Activated CD4-positive, alpha-beta memory T cell treated with anti-CD3 and anti-CD28 coated beads, Interleukin-2, amount 10 ng/mL, durations not matched to agents 7 days and 5 days (primary cell): ENCODE measurements at regions of chr13 and their contacts with region 1.

Region 1: GRCh38 chr13:110220471-110220870 is 86.5 kb downstream of the COL4A1 start:
- DNase-seq: no peak
- H3K4me3 Mint-ChIP-seq: no peak overlapping the region
- H3K27ac Mint-ChIP-seq: no peak overlapping the region
- H3K4me1 Mint-ChIP-seq: no peaks in the 10 kb centered on the region
- H3K27me3 Mint-ChIP-seq: peaks cover 15% of the 10 kb centered on the region

Region 2: DNA sequence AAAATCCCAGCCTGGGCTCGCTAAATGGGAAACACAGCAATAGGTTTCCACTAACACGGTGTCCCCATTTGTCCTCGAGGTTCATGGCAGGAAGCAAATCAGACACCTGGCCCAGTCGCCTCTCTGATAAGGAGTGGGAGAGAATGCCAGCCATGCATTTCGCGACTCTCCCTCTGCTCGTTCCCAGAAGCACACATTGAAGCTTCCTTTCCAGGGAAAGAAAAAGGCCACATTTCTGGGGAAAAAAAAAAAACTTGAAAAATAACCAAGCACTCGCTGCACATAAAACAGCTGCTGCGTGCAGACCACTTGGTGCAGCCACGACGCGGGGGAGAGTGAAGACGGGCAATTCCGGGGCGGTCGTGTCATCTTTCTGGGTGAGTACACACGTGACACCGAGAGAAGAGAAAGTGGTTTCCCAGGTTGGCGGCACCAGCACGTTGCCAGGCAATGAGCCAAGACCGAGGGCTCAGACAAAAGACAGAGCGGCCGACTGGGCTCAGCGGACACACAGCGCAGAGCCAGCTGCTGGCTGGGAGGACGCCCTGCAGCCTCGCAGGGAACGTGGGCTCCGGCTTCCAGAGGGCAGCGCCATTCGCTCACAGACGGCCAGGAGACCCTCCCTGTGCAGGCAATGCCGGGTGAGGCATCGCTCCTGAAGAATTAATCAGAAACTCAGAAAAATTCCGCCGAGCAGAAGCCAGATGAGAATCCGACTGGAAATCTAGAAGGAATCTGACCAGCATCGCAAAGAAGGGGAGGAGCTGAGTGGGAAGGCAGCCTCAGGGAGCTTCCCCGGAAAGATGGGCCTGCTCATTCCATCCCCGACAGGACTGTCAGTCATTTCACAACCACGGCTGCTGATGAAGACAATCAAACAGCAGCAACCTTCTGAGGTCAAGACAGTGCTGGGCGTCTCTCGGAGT is 350.9 kb before region 1 on chr13:
- CTCF ChIA-PET with region 1: no interaction called
- POLR2A ChIA-PET with region 1: no interaction called
- DNase-seq: peak; percentile 21
- H3K4me3 Mint-ChIP-seq: no peak overlapping the region
- H3K27ac Mint-ChIP-seq: no peak overlapping the region
- H3K4me1 Mint-ChIP-seq: peaks cover 3% of the 10 kb centered on the region
- H3K27me3 Mint-ChIP-seq: peaks cover 33% of the 10 kb centered on the region

Region 3: DNA sequence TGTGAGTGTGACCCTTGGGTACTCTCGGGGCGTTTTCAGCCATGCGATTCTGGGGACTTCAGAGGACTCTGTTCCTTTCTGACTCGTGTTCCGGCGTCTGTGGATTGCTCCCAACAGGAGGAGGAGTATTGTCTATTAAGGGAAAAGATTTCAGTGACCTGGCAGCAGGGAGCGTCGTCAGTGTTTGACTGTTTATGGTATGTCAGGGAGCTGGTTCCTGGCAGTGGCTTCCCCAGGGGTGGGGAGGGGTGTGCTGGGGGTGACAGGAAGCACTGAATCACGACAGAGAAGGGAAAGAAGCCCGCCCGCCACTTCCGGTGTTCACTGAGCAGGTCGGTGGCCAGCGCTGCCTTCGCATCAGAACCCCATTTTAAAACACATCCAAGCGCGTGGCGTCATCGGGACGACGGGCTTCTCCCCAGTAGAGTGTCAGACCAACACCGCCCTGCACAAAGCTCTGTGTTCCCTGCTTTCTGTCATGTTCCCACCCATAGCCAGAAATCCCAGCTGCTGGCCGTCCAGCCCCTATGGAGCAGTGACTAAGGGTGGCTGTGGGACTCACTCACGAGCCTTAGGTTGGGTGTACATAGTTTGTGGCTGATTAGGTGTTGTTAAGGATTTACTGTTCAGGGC is 120.5 kb after region 1 on chr13:
- CTCF ChIA-PET with region 1: no interaction called
- POLR2A ChIA-PET with region 1: no interaction called
- DNase-seq: peak; percentile 65
- H3K4me3 Mint-ChIP-seq: no peak overlapping the region
- H3K27ac Mint-ChIP-seq: no peak overlapping the region
- H3K4me1 Mint-ChIP-seq: peaks cover 20% of the 10 kb centered on the region
- H3K27me3 Mint-ChIP-seq: peaks cover 28% of the 10 kb centered on the region

Region 4: GRCh38 chr13:110412132-110412914 is 191.9 kb after region 1 on chr13:
- CTCF ChIA-PET with region 1: interaction called, 41 read pairs
- POLR2A ChIA-PET with region 1: no interaction called
- DNase-seq: peak; percentile 67
- H3K4me3 Mint-ChIP-seq: no peak overlapping the region
- H3K27ac Mint-ChIP-seq: no peak overlapping the region
- H3K4me1 Mint-ChIP-seq: peaks cover 5% of the 10 kb centered on the region
- H3K27me3 Mint-ChIP-seq: peaks cover 48% of the 10 kb centered on the region